ENCODE measurements at regions of chr1 and their contacts with region 1.

Region 1: DNA sequence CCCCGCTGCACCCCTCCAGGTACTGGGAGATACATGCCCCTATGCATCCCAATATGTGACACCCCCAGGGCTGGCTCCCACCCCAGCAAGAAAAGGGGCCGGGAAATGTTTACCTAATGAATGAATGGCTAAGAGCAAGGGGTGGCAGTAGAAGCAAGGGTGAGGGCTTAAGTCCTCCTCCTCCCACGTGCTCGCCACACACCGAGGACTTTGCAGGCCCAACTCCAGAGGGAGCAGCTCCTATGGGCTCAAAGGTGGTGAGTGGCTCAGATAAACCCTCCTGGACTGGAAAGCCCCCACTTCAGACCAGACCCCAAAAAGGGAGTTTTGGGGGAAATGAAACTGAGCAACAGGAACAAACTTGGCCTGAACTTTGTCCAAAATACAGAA is 11.4 kb downstream of the SLC45A3 start:
- DNase-seq: no peak
- ATAC-seq: peak; percentile 68
- H3K4me3 Mint-ChIP-seq: peak overlapping the region; percentile 80
- H3K27ac Mint-ChIP-seq: peak overlapping the region; percentile 93
- H3K4me1 Mint-ChIP-seq: peaks cover 87% of the 10 kb centered on the region
- H3K27me3 Mint-ChIP-seq: no peaks in the 10 kb centered on the region
- CTCF ChIP-seq: no peak

Region 2: GRCh38 chr1:205543411-205544301 is 125.3 kb before region 1 on chr1:
- CTCF ChIA-PET with region 1: no interaction called
- POLR2A ChIA-PET with region 1: no interaction called
- intact Hi-C with region 1: no loop called
- DNase-seq: no peak
- ATAC-seq: no peak
- H3K4me3 Mint-ChIP-seq: no peak overlapping the region
- H3K27ac Mint-ChIP-seq: no peak overlapping the region
- H3K4me1 Mint-ChIP-seq: peaks cover 8% of the 10 kb centered on the region
- H3K27me3 Mint-ChIP-seq: peaks cover 49% of the 10 kb centered on the region
- CTCF ChIP-seq: no peak

Region 3: GRCh38 chr1:205680073-205680851 is 11.3 kb after region 1 on chr1 and contains the start of gene SLC45A3:
- CTCF ChIA-PET with region 1: interaction called, 9 read pairs
- POLR2A ChIA-PET with region 1: interaction called, 29 read pairs
- intact Hi-C with region 1: loop called (anchors 1 kb)
- DNase-seq: no peak
- ATAC-seq: peak; percentile 75
- H3K4me3 Mint-ChIP-seq: peak within 1 kb of the TSS; percentile 85
- H3K27ac Mint-ChIP-seq: peak within 1 kb of the TSS; percentile 46
- H3K4me1 Mint-ChIP-seq: peaks cover 26% of the 10 kb centered on the region
- H3K27me3 Mint-ChIP-seq: peaks cover 2% of the 10 kb centered on the region
- CTCF ChIP-seq: no peak
- total RNA-seq, gene SLC45A3: 6.9 and 7.4 TPM in 2 replicates

Region 4: DNA sequence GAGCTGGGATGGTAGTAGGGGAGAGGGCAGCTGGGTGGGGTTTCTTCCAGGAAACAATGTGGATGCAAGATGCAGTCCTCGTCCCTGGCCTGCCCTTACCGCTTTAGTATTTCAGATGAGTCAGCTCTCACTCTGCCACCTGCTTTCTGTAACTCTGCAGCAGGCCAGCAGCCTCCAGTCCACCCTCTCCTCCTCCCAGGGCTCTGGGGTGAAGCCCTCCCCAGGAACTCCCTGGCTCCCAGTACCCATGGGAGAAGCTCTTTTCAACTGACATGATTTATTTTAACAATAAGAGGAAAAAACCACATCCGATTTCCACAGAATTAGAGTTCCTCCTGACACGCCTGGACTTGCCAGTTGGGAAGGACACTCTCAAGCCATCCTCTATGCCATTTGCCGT is 1157.5 kb after region 1 on chr1:
- CTCF ChIA-PET with region 1: no interaction called
- POLR2A ChIA-PET with region 1: no interaction called
- intact Hi-C with region 1: loop called (anchors 10 kb)
- DNase-seq: no peak
- ATAC-seq: no peak
- H3K4me3 Mint-ChIP-seq: no peak overlapping the region
- H3K27ac Mint-ChIP-seq: no peak overlapping the region
- H3K4me1 Mint-ChIP-seq: peaks cover 52% of the 10 kb centered on the region
- H3K27me3 Mint-ChIP-seq: no peaks in the 10 kb centered on the region
- CTCF ChIP-seq: no peak